Activated CD4-positive, alpha-beta T cell treated with anti-CD3 and anti-CD28 coated beads for 36 hours (primary cell): ENCODE measurements at regions of chr1 and their contacts with region 1.

Region 1: DNA sequence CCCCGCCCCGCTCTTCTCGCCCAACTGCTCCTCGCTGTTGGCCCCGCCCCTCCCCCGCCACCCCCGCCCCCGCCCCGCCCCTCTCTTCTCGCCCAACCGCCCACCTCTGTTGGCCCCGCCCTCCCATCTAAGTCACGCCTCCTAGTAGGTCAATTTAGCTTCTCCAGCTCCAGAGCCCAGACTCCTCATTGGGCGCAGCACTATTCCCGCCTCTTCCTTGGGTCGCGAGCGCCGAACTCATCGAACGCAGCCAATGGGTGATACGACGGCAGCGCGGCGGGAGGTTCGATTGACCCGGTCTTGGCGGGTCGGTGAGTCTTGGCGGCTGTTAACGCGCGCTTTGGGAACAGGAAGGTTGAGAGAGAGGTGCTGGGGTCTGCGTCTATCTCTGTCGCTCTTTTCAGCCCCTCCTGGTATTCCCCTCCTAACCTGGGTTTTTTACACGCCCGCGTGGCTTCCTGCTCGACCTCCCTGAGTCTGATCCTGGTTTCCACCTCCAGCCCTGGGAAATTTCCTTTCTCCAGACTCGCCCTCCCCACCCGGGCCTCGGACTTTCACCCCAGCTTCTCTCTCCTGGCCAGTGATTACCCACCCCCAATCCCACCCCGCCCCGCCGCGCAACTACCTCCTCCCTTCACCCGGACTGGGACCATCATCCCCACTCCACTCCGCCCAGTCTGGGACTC is at the start of gene RAD54L:
- DNase-seq: peak; percentile 99
- ATAC-seq: peak; percentile 94
- H3K4me3 Mint-ChIP-seq: peak within 1 kb of the TSS; percentile 83
- H3K27ac Mint-ChIP-seq: peak within 1 kb of the TSS; percentile 92
- H3K4me1 Mint-ChIP-seq: peaks cover 20% of the 10 kb centered on the region
- H3K27me3 Mint-ChIP-seq: no peaks in the 10 kb centered on the region
- total RNA-seq, gene RAD54L: 64.2 to 73.4 TPM

Region 2: DNA sequence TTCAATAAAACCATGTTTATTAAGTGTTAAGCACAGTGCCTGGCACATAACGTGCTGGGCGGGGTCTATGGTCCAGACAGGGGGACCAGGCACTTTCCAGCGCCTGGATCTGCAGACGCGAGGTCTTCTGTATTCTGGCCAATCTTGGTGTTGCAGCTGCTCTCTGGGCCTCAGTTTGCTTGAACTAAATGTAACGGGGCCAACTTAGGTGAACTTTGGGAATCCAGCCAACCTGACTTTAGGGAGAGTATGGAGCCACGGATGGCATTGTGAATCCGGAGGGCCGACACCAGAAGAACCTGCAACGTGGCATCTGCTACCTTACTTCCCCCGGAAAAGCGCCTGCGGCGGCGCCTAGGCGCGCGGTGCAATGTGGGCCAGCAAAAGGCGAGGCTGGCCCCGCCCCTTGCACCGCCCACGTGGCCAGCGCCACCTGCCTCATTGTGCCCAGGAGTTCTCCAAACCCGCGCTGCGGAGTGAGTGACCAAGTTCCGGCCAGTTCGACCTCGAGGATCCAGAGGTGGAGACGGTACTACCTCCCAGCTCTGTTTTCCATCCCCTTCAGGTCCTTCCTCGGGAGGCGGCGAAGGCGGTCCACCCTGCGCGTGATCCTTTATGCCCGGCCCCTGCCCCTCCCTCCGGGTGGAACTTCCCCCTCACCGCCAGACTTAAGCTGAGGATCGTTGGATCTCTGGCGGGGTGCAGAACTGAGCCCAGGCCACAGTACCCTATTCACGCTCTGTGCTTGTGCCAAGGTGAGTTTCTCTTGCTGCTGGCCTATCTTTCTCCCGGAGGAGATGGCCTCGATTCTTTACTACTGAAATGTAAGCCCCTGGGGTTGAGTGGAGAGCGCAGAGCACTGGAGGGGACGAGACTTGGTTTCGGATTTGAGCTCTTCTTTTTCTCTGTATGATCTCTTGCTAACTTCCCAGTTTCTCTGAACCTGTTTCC is 696.9 kb before region 1 on chr1 and contains the start of gene AKR1A1:
- CTCF ChIA-PET with region 1: no interaction called
- POLR2A ChIA-PET with region 1: interaction called, 4 read pairs
- intact Hi-C with region 1: loop called in 1 of 2 experiments (anchors 1 kb)
- DNase-seq: peak; percentile 95
- ATAC-seq: peak; percentile 94
- H3K4me3 Mint-ChIP-seq: peak within 1 kb of the TSS; percentile 94
- H3K27ac Mint-ChIP-seq: peak within 1 kb of the TSS; percentile 94
- H3K4me1 Mint-ChIP-seq: peaks cover 16% of the 10 kb centered on the region
- H3K27me3 Mint-ChIP-seq: no peaks in the 10 kb centered on the region
- total RNA-seq, gene AKR1A1: 140 to 181 TPM

Region 3: GRCh38 chr1:46132529-46133180 is 114.9 kb before region 1 on chr1 and contains the start of gene PIK3R3:
- CTCF ChIA-PET with region 1: no interaction called
- POLR2A ChIA-PET with region 1: no interaction called
- intact Hi-C with region 1: loop called in 1 of 2 experiments (anchors 1 kb)
- DNase-seq: peak; percentile 94
- ATAC-seq: peak; percentile 98
- H3K4me3 Mint-ChIP-seq: peak within 1 kb of the TSS; percentile 74
- H3K27ac Mint-ChIP-seq: peak within 1 kb of the TSS; percentile 87
- H3K4me1 Mint-ChIP-seq: peaks cover 21% of the 10 kb centered on the region
- H3K27me3 Mint-ChIP-seq: peaks cover 51% of the 10 kb centered on the region
- total RNA-seq, gene PIK3R3: 0.46 to 0.78 TPM

Region 4: DNA sequence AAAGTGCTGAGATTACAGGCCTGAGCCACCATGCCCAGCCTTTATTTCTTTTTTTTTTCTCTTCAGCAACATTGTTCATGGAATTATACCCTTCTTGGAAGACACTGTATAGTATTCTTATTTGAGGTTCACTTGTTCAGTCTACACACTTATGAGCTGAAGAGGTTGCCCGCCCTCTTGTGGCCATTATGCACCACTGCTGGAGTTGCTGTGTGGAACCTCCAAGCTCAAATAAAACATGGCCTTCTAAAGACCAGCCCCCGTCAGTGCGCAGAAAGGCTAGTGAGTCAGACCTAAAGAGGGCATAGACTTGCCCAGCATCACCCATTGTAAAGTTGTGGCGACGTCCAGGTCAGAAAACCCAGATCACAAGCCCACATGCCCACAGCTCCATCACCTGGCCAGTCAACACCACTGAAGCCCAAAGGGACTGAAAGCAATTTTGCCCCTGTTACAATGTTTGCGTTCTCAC is 24.1 kb before region 1 on chr1:
- CTCF ChIA-PET with region 1: interaction called, 19 read pairs
- POLR2A ChIA-PET with region 1: interaction called, 3 read pairs
- intact Hi-C with region 1: no loop called
- DNase-seq: peak; percentile 82
- ATAC-seq: peak; percentile 100
- H3K4me3 Mint-ChIP-seq: no peak overlapping the region
- H3K27ac Mint-ChIP-seq: no peak overlapping the region
- H3K4me1 Mint-ChIP-seq: peaks cover under 1% of the 10 kb centered on the region
- H3K27me3 Mint-ChIP-seq: no peaks in the 10 kb centered on the region

Region 5: DNA sequence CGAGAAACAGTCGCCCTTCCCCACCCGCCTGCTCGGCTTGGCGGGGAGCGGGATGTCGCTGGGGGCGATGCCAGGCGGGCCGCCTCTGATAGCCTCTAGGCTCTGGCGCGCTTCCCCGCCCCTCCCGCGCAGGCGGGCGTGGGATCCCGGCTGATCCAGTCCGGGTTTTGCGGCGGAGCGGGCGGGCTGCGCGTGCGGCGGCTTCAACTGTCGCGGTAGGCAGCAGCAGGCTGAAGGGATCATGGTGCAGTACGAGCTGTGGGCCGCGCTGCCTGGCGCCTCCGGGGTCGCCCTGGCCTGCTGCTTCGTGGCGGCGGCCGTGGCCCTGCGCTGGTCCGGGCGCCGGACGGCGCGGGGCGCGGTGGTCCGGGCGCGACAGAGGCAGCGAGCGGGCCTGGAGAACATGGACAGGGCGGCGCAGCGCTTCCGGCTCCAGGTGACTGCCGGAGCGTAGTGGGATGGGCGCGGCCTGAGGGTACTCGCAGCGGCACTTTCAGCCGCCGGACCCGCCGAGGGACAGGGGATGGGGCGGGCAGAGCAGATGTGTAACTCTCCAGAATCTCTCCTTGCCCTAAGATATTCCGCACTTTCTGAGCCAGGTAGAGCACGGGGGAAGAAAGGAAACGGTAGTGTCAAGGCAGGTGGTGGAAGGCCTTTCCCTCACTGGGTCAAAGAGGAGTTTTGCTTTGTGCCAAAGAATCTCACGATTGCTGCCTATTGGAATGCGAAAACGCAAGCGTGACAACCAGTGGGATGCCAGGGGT is 146.7 kb after region 1 on chr1 and contains the start of gene FAAH:
- CTCF ChIA-PET with region 1: no interaction called
- POLR2A ChIA-PET with region 1: no interaction called
- intact Hi-C with region 1: loop called in 1 of 2 experiments (anchors 1 kb)
- DNase-seq: peak; percentile 79
- ATAC-seq: peak; percentile 86
- H3K4me3 Mint-ChIP-seq: peak within 1 kb of the TSS; percentile 66
- H3K27ac Mint-ChIP-seq: peak within 1 kb of the TSS; percentile 2
- H3K4me1 Mint-ChIP-seq: peaks cover 9% of the 10 kb centered on the region
- H3K27me3 Mint-ChIP-seq: peaks cover 8% of the 10 kb centered on the region
- total RNA-seq, gene FAAH: 5.3 to 7.5 TPM

Region 6: DNA sequence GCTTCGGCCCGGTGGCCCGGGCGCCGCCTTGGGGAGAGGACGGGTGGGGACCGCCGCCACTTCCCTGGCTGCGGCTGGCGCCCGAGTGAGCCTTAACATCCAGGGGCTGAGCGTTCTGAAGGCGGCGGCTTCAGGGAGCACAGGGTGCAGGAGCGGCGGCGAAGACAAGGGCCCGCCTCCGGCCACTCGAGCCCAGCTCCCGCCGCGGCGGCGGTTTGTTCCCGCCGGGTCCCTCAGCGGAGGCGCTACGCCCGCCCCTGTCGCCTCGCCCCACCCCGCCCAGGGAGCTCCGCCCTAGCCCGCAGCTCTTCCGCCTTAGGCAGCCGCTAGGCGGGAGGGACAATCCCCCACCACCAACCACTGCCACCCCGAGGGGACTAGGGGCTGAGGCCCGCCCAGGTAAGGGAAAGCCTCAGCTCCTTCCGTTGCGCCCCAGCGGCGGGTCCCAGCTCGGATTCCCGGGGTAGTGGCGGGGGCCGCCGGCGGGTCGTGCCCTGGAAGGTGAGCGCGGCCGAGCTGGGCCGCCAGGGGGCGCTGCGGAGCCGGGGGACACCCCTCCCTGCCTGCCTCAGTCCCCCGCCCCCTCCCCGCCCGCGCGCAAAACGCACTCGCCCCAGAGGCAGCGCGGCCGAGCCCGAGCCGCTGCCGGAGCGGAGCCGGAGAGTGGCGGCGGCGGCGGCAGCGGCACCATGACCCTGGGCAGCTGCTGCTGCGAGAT is 1190.0 kb after region 1 on chr1 and contains the start of gene FOXD2:
- CTCF ChIA-PET with region 1: no interaction called
- POLR2A ChIA-PET with region 1: no interaction called
- intact Hi-C with region 1: loop called in 1 of 2 experiments (anchors 5 kb)
- DNase-seq: peak; percentile 95
- ATAC-seq: peak; percentile 90
- H3K4me3 Mint-ChIP-seq: peak within 1 kb of the TSS; percentile 92
- H3K27ac Mint-ChIP-seq: peak within 1 kb of the TSS; percentile 73
- H3K4me1 Mint-ChIP-seq: peaks cover 24% of the 10 kb centered on the region
- H3K27me3 Mint-ChIP-seq: peaks cover 26% of the 10 kb centered on the region
- total RNA-seq, gene FOXD2: 0.05 to 0.07 TPM